Endothelial cell of umbilical vein (primary cell): ENCODE measurements at regions of chr13 and their contacts with region 1.

Region 1: GRCh38 chr13:70723732-70724131 is 615.5 kb upstream of the KLHL1 start:
- DNase-seq: peak; percentile 62
- H3K4me3 ChIP-seq: no peak overlapping the region
- H3K27ac ChIP-seq: no peak overlapping the region
- H3K4me1 ChIP-seq: no peaks in the 10 kb centered on the region
- H3K27me3 ChIP-seq: no peaks in the 10 kb centered on the region
- CTCF ChIP-seq: peak in 1 of 2 donors; percentile 28
- POLR2A ChIP-seq: no peak

Region 2: DNA sequence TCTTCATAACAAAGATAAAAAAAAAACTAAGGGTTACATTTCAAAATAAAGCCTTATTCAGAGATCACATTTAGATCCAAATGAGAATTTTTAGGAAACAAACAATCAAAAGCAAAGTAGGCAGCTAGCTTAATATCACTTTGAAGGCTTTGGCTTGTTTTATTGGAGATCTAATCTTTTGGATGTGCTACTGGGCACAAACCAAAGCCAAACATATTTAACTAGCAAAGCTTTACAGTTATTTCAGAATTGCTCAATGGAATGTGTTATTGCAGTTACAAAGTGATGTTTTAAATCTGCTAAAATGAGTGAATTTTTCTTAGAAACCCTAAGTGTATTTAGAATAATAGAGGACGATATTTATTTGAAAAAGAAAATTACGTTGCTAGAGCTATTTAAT is 500.8 kb before region 1 on chr13:
- CTCF ChIA-PET with region 1: no interaction called
- POLR2A ChIA-PET with region 1: no interaction called
- dilution Hi-C with region 1: no loop called
- intact Hi-C with region 1: no loop called
- DNase-seq: no peak
- H3K4me3 ChIP-seq: no peak overlapping the region
- H3K27ac ChIP-seq: no peak overlapping the region
- H3K4me1 ChIP-seq: no peaks in the 10 kb centered on the region
- H3K27me3 ChIP-seq: no peaks in the 10 kb centered on the region
- CTCF ChIP-seq: no peak
- POLR2A ChIP-seq: no peak

Region 3: DNA sequence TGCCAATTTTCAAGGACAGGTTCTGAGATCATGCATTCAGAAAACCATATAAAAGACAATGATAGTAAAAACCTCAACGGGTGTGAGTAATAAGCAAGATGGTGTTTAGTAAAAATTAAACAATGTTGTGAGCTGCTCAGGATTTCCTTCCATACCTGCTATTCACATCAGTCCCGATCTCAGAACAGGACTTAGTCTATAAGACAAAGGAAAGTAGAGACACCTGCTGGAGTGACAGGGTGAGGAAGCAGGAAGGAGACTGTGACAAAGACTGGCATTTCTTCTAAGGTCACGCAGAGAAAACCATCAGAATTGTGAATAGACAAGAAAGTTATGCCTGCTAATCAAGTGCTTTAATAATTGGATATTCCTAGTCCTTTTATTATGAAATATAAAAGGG is 495.2 kb after region 1 on chr13:
- CTCF ChIA-PET with region 1: no interaction called
- POLR2A ChIA-PET with region 1: no interaction called
- dilution Hi-C with region 1: no loop called
- intact Hi-C with region 1: loop called (anchors 10 kb)
- DNase-seq: peak; percentile 49
- H3K4me3 ChIP-seq: no peak overlapping the region
- H3K27ac ChIP-seq: no peak overlapping the region
- H3K4me1 ChIP-seq: peaks cover 2% of the 10 kb centered on the region
- H3K27me3 ChIP-seq: no peaks in the 10 kb centered on the region
- CTCF ChIP-seq: no peak
- POLR2A ChIP-seq: no peak

Region 4: DNA sequence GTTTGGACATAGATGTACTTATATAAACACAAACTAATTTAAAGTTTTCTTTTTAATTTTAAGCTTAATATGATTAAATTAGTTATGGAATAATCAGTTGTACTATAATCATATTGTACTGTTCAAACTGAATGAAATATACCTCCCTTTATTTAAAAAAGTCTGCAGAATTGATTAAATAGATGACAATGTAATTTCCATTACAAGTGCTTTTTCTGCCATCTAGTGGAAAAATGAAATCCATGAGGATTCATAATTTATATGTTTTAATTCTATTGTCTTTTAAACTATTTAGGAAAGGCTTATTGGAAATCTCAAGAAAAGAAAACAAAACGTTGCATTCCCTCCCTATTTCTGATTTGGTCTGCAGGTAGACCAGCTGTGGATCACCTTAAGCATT is 1972.8 kb after region 1 on chr13:
- CTCF ChIA-PET with region 1: no interaction called
- POLR2A ChIA-PET with region 1: no interaction called
- dilution Hi-C with region 1: no loop called
- intact Hi-C with region 1: loop called (anchors 5 kb)
- DNase-seq: peak; percentile 45
- H3K4me3 ChIP-seq: no peak overlapping the region
- H3K27ac ChIP-seq: no peak overlapping the region
- H3K4me1 ChIP-seq: no peaks in the 10 kb centered on the region
- H3K27me3 ChIP-seq: peaks cover 16 to 21% of the 10 kb centered on the region in 2 experiments
- CTCF ChIP-seq: peak in 1 of 2 donors; percentile 2
- POLR2A ChIP-seq: no peak